CD8-positive, alpha-beta T cell (primary cell): ENCODE measurements at regions of chr1 and their contacts with region 1.

Region 1: GRCh38 chr1:42766741-42767509 is at the starts of genes C1orf50 and P3H1:
- DNase-seq: peak; percentile 99 to 100 (median 99)
- ATAC-seq: peak; percentile 92
- H3K4me3 ChIP-seq: peak within 1 kb of the TSS; percentile 73 to 97
- H3K4me3 Mint-ChIP-seq: no peak within 1 kb of the TSS
- H3K27ac ChIP-seq: peak within 1 kb of the TSS; percentile 87 to 88
- H3K27ac Mint-ChIP-seq: peak within 1 kb of the TSS; percentile 97
- H3K4me1 ChIP-seq: peaks cover 40% of the 10 kb centered on the region
- H3K4me1 Mint-ChIP-seq: peaks cover 36% of the 10 kb centered on the region
- H3K27me3 ChIP-seq: no peaks in the 10 kb centered on the region
- H3K27me3 Mint-ChIP-seq: no peaks in the 10 kb centered on the region
- CTCF ChIP-seq: no peak
- total RNA-seq, gene C1orf50: 16.1 to 20.3 TPM
- total RNA-seq, gene P3H1: 19.6 to 22.5 TPM

Region 2: GRCh38 chr1:42462828-42463763 is 303.8 kb before region 1 on chr1 and contains the start of gene CCDC30:
- CTCF ChIA-PET with region 1: no interaction called
- POLR2A ChIA-PET with region 1: interaction called, 4 read pairs
- intact Hi-C with region 1: loop called (anchors 2 to 5 kb)
- DNase-seq: peak; percentile 92 to 99 (median 94)
- ATAC-seq: peak; percentile 98
- H3K4me3 ChIP-seq: peak within 1 kb of the TSS; percentile 60 to 62
- H3K4me3 Mint-ChIP-seq: peak within 1 kb of the TSS; percentile 84
- H3K27ac ChIP-seq: peak within 1 kb of the TSS; percentile 70 to 83
- H3K27ac Mint-ChIP-seq: peak within 1 kb of the TSS; percentile 93
- H3K4me1 ChIP-seq: peaks cover 23% of the 10 kb centered on the region
- H3K4me1 Mint-ChIP-seq: peaks cover 40% of the 10 kb centered on the region
- H3K27me3 ChIP-seq: no peaks in the 10 kb centered on the region
- H3K27me3 Mint-ChIP-seq: no peaks in the 10 kb centered on the region
- CTCF ChIP-seq: no peak
- total RNA-seq, gene CCDC30: 2.5 to 2.8 TPM

Region 3: GRCh38 chr1:42681741-42682483 is 85.0 kb before region 1 on chr1 and contains the start of gene YBX1:
- CTCF ChIA-PET with region 1: no interaction called
- POLR2A ChIA-PET with region 1: interaction called, 36 read pairs
- intact Hi-C with region 1: loop called (anchors 1 kb)
- DNase-seq: peak; percentile 88 to 98 (median 95)
- ATAC-seq: peak; percentile 89
- H3K4me3 ChIP-seq: peak within 1 kb of the TSS; percentile 81 to 84
- H3K4me3 Mint-ChIP-seq: peak within 1 kb of the TSS; percentile 99
- H3K27ac ChIP-seq: peak within 1 kb of the TSS; percentile 82 to 88
- H3K27ac Mint-ChIP-seq: peak within 1 kb of the TSS; percentile 97
- H3K4me1 ChIP-seq: peaks cover 43% of the 10 kb centered on the region
- H3K4me1 Mint-ChIP-seq: peaks cover 58% of the 10 kb centered on the region
- H3K27me3 ChIP-seq: no peaks in the 10 kb centered on the region
- H3K27me3 Mint-ChIP-seq: no peaks in the 10 kb centered on the region
- CTCF ChIP-seq: no peak
- total RNA-seq, gene YBX1: 440 to 450 TPM

Region 4: DNA sequence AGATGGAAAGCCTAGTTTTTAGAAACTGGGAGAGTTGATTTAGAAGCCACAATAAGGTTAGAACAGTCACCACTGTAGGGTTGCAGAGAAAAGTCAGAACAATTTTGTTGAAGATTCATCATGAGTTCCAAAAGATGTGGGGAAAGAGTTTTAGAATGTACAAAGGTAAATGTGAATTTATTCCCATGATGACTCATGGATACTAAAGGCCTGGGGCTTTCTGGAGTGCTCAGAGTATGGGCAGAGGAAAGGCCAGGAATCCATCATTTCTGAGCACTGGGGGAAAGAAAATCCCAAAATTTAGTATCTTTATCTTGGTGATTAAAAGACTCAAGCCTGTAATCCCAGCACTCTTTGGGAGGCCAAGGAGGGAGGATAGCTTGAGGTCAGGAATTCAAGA is 66.9 kb before region 1 on chr1:
- CTCF ChIA-PET with region 1: no interaction called
- POLR2A ChIA-PET with region 1: no interaction called
- intact Hi-C with region 1: no loop called
- DNase-seq: no peak
- ATAC-seq: no peak
- H3K4me3 ChIP-seq: no peak overlapping the region
- H3K4me3 Mint-ChIP-seq: no peak overlapping the region
- H3K27ac ChIP-seq: no peak overlapping the region
- H3K27ac Mint-ChIP-seq: peak overlapping the region; percentile 41
- H3K4me1 ChIP-seq: no peaks in the 10 kb centered on the region
- H3K4me1 Mint-ChIP-seq: peaks cover 16% of the 10 kb centered on the region
- H3K27me3 ChIP-seq: no peaks in the 10 kb centered on the region
- H3K27me3 Mint-ChIP-seq: no peaks in the 10 kb centered on the region
- CTCF ChIP-seq: no peak

Region 5: DNA sequence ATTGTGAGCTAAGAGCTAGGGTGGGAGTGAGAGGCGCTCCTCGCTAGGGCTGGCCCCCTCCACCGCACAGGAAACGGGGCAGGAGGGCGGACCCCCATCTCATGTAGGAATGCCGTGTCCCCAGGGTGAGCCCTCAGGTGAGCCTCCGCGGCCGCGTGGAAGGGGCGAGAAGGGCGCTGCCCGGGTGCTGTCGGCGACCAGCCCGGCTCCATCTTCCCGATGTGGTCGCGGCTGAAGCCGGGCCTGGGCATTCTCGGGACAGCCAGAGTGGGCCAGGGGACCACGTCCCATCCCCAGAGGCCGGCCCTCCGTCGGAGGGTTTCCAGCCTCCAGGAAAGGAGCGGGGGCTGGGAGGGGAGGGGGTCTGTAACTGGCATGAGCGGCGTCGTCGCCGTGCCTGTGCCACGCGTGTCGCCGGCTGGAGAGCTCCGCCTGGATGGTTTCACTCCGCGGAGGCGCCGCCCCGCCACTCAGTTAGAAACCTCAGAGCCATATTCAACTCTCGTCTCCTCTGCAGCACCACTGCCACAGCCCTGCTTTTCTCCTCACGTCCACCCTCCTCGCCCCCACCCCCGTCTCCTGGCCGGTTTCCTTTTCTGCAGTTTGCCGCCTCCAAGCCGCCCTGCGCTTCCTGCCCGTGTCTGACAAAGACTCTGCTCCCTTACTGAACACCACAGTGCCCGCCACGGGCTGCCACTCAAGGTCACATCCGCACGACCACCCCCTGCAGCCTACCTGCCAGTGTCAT is 18.2 kb after region 1 on chr1 and contains the start of gene TMEM269:
- CTCF ChIA-PET with region 1: interaction called, 12 read pairs
- POLR2A ChIA-PET with region 1: interaction called, 34 read pairs
- intact Hi-C with region 1: loop called in 1 of 2 experiments (anchors 1 kb)
- DNase-seq: peak; percentile 4 to 73 (median 51)
- ATAC-seq: peak; percentile 88
- H3K4me3 ChIP-seq: peak within 1 kb of the TSS; percentile 53 to 61
- H3K4me3 Mint-ChIP-seq: peak within 1 kb of the TSS; percentile 84
- H3K27ac ChIP-seq: peak within 1 kb of the TSS in 1 of 2 experiments; percentile 10
- H3K27ac Mint-ChIP-seq: peak within 1 kb of the TSS; percentile 65
- H3K4me1 ChIP-seq: peaks cover 16% of the 10 kb centered on the region
- H3K4me1 Mint-ChIP-seq: peaks cover 22% of the 10 kb centered on the region
- H3K27me3 ChIP-seq: no peaks in the 10 kb centered on the region
- H3K27me3 Mint-ChIP-seq: no peaks in the 10 kb centered on the region
- CTCF ChIP-seq: no peak
- total RNA-seq, gene TMEM269: 0.44 to 0.57 TPM

Region 6: GRCh38 chr1:42846257-42847110 is 79.6 kb after region 1 on chr1 and contains the start of gene ZNF691:
- CTCF ChIA-PET with region 1: interaction called, 13 read pairs
- POLR2A ChIA-PET with region 1: interaction called, 24 read pairs
- intact Hi-C with region 1: loop called (anchors 1 kb)
- DNase-seq: peak; percentile 71 to 96 (median 87)
- ATAC-seq: peak; percentile 97
- H3K4me3 ChIP-seq: peak within 1 kb of the TSS; percentile 74 to 96
- H3K4me3 Mint-ChIP-seq: peak within 1 kb of the TSS; percentile 92
- H3K27ac ChIP-seq: peak within 1 kb of the TSS; percentile 46 to 72
- H3K27ac Mint-ChIP-seq: peak within 1 kb of the TSS; percentile 88
- H3K4me1 ChIP-seq: peaks cover 23% of the 10 kb centered on the region
- H3K4me1 Mint-ChIP-seq: peaks cover 38% of the 10 kb centered on the region
- H3K27me3 ChIP-seq: no peaks in the 10 kb centered on the region
- H3K27me3 Mint-ChIP-seq: no peaks in the 10 kb centered on the region
- CTCF ChIP-seq: no peak
- total RNA-seq, gene ZNF691: 1.1 to 1.3 TPM

Region 7: GRCh38 chr1:42873670-42874069 is 106.7 kb after region 1 on chr1:
- CTCF ChIA-PET with region 1: no interaction called
- POLR2A ChIA-PET with region 1: no interaction called
- intact Hi-C with region 1: no loop called
- DNase-seq: no peak
- ATAC-seq: no peak
- H3K4me3 ChIP-seq: no peak overlapping the region
- H3K4me3 Mint-ChIP-seq: no peak overlapping the region
- H3K27ac ChIP-seq: no peak overlapping the region
- H3K27ac Mint-ChIP-seq: no peak overlapping the region
- H3K4me1 ChIP-seq: no peaks in the 10 kb centered on the region
- H3K4me1 Mint-ChIP-seq: no peaks in the 10 kb centered on the region
- H3K27me3 ChIP-seq: no peaks in the 10 kb centered on the region
- H3K27me3 Mint-ChIP-seq: peaks cover 2% of the 10 kb centered on the region
- CTCF ChIP-seq: no peak

Region 8: DNA sequence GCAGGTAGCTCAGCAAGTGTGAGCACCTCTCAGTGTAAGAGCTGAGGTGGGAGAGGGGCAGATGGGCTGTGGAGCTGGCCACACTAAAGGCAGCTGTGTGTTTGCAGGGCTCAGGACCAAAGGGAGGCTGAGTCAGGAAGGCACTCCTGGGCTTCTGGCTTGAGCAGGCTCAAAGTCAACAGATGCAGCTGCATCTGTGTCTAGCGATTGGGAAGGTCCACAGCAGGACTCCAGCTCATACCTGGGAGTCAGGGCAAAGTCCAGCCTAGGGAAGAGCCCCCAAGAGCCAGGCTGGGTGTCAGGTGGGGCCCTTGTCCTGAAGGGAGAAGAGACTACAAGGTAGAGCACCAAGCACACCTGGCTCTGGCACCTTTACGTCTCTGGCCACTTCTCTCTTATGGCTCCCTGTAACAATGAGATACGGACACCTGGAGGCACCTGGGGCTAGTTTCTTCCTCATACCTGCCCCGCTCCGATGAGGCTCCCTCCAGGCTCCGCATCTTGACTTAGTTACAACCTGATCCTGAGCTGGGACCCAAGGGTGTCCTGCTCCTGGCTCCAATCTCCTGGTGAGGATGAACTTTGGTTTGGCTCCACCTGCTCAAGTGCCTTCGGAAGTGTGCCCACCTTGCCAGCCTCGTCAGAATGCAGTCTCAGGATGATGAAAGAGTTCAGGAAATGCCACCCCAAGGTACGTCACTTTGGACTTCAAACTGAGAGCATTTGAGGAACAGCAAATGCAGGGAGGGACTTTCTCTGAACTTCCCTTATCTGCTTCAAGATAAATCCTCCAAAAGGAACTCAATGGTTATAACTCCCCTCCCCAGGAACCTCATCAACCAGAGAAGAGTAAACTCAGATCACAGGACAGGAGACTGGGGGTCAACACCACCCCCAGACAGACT is 213.2 kb after region 1 on chr1:
- CTCF ChIA-PET with region 1: no interaction called
- POLR2A ChIA-PET with region 1: no interaction called
- intact Hi-C with region 1: no loop called
- DNase-seq: no peak
- ATAC-seq: no peak
- H3K4me3 ChIP-seq: no peak overlapping the region
- H3K4me3 Mint-ChIP-seq: no peak overlapping the region
- H3K27ac ChIP-seq: no peak overlapping the region
- H3K27ac Mint-ChIP-seq: no peak overlapping the region
- H3K4me1 ChIP-seq: no peaks in the 10 kb centered on the region
- H3K4me1 Mint-ChIP-seq: no peaks in the 10 kb centered on the region
- H3K27me3 ChIP-seq: no peaks in the 10 kb centered on the region
- H3K27me3 Mint-ChIP-seq: no peaks in the 10 kb centered on the region
- CTCF ChIP-seq: no peak

Region 9: DNA sequence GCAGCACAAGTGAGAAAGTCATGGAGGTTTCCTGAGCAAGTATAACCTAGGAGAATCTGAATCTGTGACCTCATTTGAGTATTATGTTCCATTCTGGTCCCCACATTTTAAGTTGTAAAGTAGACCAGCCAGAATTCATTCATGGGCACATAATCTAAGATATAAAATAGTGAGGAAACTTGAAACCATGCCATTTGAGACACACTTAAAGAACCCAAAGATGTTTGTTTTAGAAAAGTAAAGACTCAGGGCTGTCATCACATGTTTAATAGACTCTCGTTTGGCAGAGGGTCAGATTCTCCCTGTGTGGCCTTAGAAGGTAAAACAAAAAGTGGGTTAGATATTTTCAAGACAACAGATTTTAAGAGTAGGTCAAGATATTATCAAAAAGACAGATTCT is 629.1 kb after region 1 on chr1:
- CTCF ChIA-PET with region 1: no interaction called
- POLR2A ChIA-PET with region 1: no interaction called
- intact Hi-C with region 1: no loop called
- DNase-seq: no peak
- ATAC-seq: no peak
- H3K4me3 ChIP-seq: no peak overlapping the region
- H3K4me3 Mint-ChIP-seq: no peak overlapping the region
- H3K27ac ChIP-seq: no peak overlapping the region
- H3K27ac Mint-ChIP-seq: peak overlapping the region; percentile 32
- H3K4me1 ChIP-seq: peaks cover 4% of the 10 kb centered on the region
- H3K4me1 Mint-ChIP-seq: peaks cover 45% of the 10 kb centered on the region
- H3K27me3 ChIP-seq: no peaks in the 10 kb centered on the region
- H3K27me3 Mint-ChIP-seq: no peaks in the 10 kb centered on the region
- CTCF ChIP-seq: no peak